Caco-2 (cell line): ENCODE measurements at regions of chrX and their contacts with region 1.

Region 1: GRCh38 chrX:119516157-119516702 is 48.0 kb downstream of the SLC25A5 start:
- DNase-seq: peak in 1 of 2 experiments; percentile 51
- H3K4me3 ChIP-seq: no peak overlapping the region
- H3K4me3 Mint-ChIP-seq: no peak overlapping the region
- H3K27ac Mint-ChIP-seq: no peak overlapping the region
- H3K4me1 ChIP-seq: no peaks in the 10 kb centered on the region
- H3K4me1 Mint-ChIP-seq: peaks cover 13% of the 10 kb centered on the region
- H3K27me3 ChIP-seq: no peaks in the 10 kb centered on the region
- H3K27me3 Mint-ChIP-seq: no peaks in the 10 kb centered on the region
- CTCF ChIP-seq: peak; percentile 59 to 79

Region 2: DNA sequence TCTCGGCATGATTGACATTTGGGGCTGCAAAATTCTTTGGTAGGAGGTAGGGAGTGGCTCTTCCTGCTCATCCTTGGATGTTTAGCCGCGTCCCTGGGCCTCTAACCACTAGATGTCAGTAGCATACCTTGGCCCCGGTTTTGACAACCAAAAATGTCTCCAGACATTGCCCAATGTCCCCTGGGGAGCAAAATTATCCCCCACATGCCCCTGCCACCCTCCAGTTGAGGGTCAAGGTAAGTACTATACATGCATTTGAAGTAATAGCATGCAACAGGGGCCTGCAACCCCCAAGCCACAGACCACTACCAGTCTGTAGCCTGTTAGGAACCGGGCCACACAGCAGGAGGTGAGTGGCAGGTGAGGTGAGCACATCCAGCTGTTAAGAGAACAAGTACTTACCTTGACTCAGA is 371.0 kb before region 1 on chrX:
- CTCF ChIA-PET with region 1: no interaction called
- POLR2A ChIA-PET with region 1: no interaction called
- intact Hi-C with region 1: loop called (anchors 5 kb)
- DNase-seq: peak; percentile 32 to 36
- H3K4me3 ChIP-seq: no peak overlapping the region
- H3K4me3 Mint-ChIP-seq: no peak overlapping the region
- H3K27ac Mint-ChIP-seq: no peak overlapping the region
- H3K4me1 ChIP-seq: no peaks in the 10 kb centered on the region
- H3K4me1 Mint-ChIP-seq: no peaks in the 10 kb centered on the region
- H3K27me3 ChIP-seq: no peaks in the 10 kb centered on the region
- H3K27me3 Mint-ChIP-seq: no peaks in the 10 kb centered on the region
- CTCF ChIP-seq: peak; percentile 23 to 61

Region 3: GRCh38 chrX:119468930-119469635 is 47.1 kb before region 1 on chrX:
- CTCF ChIA-PET with region 1: interaction called, 27 read pairs
- POLR2A ChIA-PET with region 1: interaction called, 10 read pairs
- intact Hi-C with region 1: loop called (anchors 1 kb)
- DNase-seq: peak; percentile 79 to 89
- H3K4me3 ChIP-seq: peak overlapping the region; percentile 91
- H3K4me3 Mint-ChIP-seq: peak overlapping the region; percentile 93
- H3K27ac Mint-ChIP-seq: peak overlapping the region; percentile 94
- H3K4me1 ChIP-seq: no peaks in the 10 kb centered on the region; the same call in 1 of the 2 replicates
- H3K4me1 Mint-ChIP-seq: no peaks in the 10 kb centered on the region
- H3K27me3 ChIP-seq: no peaks in the 10 kb centered on the region
- H3K27me3 Mint-ChIP-seq: no peaks in the 10 kb centered on the region
- CTCF ChIP-seq: peak; percentile 47 to 65

Region 4: DNA sequence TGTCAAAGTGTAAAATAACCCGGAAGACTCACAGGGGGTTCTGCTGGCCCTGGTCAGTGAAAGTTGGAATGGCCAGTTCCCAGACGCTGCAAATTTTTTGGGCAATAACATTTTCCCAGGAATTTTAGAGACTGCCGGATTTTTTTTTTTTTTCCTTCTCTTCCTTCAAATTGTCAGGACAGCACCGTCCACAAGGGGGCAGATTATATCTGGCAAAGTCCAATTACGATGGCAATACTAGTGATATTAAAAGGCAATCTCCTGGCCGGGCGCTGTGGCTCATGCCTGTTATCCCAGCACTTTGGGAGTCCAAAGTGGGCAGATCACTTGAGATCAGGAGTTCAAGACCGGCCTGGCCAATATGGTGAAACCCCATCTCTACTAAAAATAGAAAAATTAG is 27.5 kb before region 1 on chrX:
- CTCF ChIA-PET with region 1: interaction called, 12 read pairs
- POLR2A ChIA-PET with region 1: no interaction called
- intact Hi-C with region 1: loop called (anchors 1 kb)
- DNase-seq: peak; percentile 53
- H3K4me3 ChIP-seq: no peak overlapping the region
- H3K4me3 Mint-ChIP-seq: no peak overlapping the region
- H3K27ac Mint-ChIP-seq: no peak overlapping the region
- H3K4me1 ChIP-seq: no peaks in the 10 kb centered on the region
- H3K4me1 Mint-ChIP-seq: no peaks in the 10 kb centered on the region
- H3K27me3 ChIP-seq: no peaks in the 10 kb centered on the region
- H3K27me3 Mint-ChIP-seq: no peaks in the 10 kb centered on the region
- CTCF ChIP-seq: peak; percentile 40 to 55

Region 5: GRCh38 chrX:119574394-119575266 is 58.4 kb after region 1 on chrX and contains the start of gene UBE2A:
- CTCF ChIA-PET with region 1: interaction called, 7 read pairs
- POLR2A ChIA-PET with region 1: no interaction called
- intact Hi-C with region 1: loop called (anchors 2 kb)
- DNase-seq: peak; percentile 91
- H3K4me3 ChIP-seq: peak within 1 kb of the TSS; percentile 79
- H3K4me3 Mint-ChIP-seq: peak within 1 kb of the TSS; percentile 98
- H3K27ac Mint-ChIP-seq: peak within 1 kb of the TSS; percentile 97
- H3K4me1 ChIP-seq: 0 out of 2 replicates have a peak, but pooled peaks cover 3% of the 10 kb centered on the region
- H3K4me1 Mint-ChIP-seq: peaks cover 11% of the 10 kb centered on the region
- H3K27me3 ChIP-seq: no peaks in the 10 kb centered on the region
- H3K27me3 Mint-ChIP-seq: no peaks in the 10 kb centered on the region
- CTCF ChIP-seq: peak in 1 of 2 experiments; percentile 27
- total RNA-seq, gene UBE2A: 49.6 and 52.9 TPM in 2 replicates

Region 6: DNA sequence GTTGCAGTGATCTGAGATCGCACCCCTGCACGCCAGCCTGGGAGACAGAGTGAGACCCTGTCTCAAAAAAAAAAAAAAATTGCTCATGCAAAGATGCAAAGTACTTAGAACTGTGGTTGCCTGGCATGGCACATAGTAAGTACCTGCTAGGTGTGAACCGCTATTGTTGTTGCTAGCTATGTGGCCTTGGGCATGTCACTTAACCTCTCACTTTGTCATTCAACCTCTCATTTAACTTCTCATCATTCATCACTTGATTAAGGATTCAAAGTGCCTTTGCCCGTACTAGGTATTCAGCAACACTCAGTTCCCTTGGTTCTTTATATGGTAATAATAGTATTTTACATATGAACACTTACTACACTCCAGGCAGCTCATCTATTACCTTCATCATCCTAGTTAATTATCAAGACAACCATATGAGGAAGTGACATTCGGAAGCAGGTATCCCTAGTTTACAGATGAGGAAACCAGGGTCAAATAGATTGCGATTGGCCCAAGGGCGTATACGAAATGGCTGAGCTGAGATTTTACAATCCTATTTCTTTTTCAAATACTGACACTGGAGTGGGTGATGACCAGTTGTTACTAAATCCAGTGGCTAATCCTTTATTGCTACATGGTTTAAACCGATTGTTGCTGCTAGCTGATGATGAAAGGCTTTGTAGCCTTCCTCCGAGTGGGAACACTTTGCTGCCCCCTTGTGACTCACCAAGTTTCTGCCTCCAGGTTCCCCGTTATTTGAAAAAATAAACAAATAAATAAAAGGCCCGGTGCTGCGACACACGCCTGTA is 213.4 kb after region 1 on chrX:
- CTCF ChIA-PET with region 1: interaction called, 7 read pairs
- POLR2A ChIA-PET with region 1: no interaction called
- intact Hi-C with region 1: loop called (anchors 1 kb)
- DNase-seq: peak; percentile 47 to 63
- H3K4me3 ChIP-seq: no peak overlapping the region
- H3K4me3 Mint-ChIP-seq: no peak overlapping the region
- H3K27ac Mint-ChIP-seq: no peak overlapping the region
- H3K4me1 ChIP-seq: no peaks in the 10 kb centered on the region
- H3K4me1 Mint-ChIP-seq: no peaks in the 10 kb centered on the region
- H3K27me3 ChIP-seq: no peaks in the 10 kb centered on the region
- H3K27me3 Mint-ChIP-seq: peaks cover 7% of the 10 kb centered on the region
- CTCF ChIP-seq: peak; percentile 57 to 69

Region 7: DNA sequence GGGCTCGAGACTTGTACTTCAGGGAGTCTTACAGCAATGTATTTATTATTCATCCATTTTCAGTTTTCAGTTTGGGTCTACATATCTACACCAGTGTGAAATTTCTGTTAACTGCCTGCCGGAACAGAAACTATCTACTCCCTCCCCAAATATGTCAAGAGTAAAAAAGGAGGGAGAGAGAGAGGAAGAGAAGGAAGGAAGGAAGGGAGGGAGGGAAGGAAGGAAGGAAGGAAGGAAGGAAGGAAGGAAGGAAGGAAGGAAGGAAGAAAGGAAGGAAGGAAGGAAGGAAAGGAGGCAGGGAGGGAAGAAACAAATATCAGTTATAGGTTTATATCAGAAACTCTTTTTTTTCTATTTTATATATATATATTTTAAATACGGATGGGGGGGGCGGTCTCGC is 262.6 kb after region 1 on chrX:
- CTCF ChIA-PET with region 1: no interaction called
- POLR2A ChIA-PET with region 1: no interaction called
- intact Hi-C with region 1: loop called (anchors 1 kb)
- DNase-seq: no peak
- H3K4me3 ChIP-seq: no peak overlapping the region
- H3K4me3 Mint-ChIP-seq: no peak overlapping the region
- H3K27ac Mint-ChIP-seq: no peak overlapping the region
- H3K4me1 ChIP-seq: no peaks in the 10 kb centered on the region
- H3K4me1 Mint-ChIP-seq: no peaks in the 10 kb centered on the region
- H3K27me3 ChIP-seq: no peaks in the 10 kb centered on the region
- H3K27me3 Mint-ChIP-seq: no peaks in the 10 kb centered on the region
- CTCF ChIP-seq: no peak